Psoas muscle (tissue), 8 donors: ENCODE measurements at regions of chr22 and their contacts with region 1.

Region 1: GRCh38 chr22:43077121-43077877 is 11.9 kb downstream of the TTLL1 start:
- DNase-seq: no peak
- ATAC-seq: no peak
- H3K4me3 ChIP-seq: no peak overlapping the region
- H3K27ac ChIP-seq: no peak overlapping the region
- H3K4me1 ChIP-seq: no peaks in the 10 kb centered on the region
- H3K27me3 ChIP-seq: no peaks in the 10 kb centered on the region
- CTCF ChIP-seq: no peak

Region 2: GRCh38 chr22:43042101-43042780 is 35.1 kb before region 1 on chr22:
- intact Hi-C with region 1: loop called in 1 of 2 experiments (anchors 5 kb)
- DNase-seq: no peak
- ATAC-seq: peak; percentile 60 to 77 (median 68)
- H3K4me3 ChIP-seq: no peak overlapping the region
- H3K27ac ChIP-seq: no peak overlapping the region
- H3K4me1 ChIP-seq: no peaks in the 10 kb centered on the region
- H3K27me3 ChIP-seq: no peaks in the 10 kb centered on the region
- CTCF ChIP-seq: no peak